PC-3 (cell line): ENCODE measurements at regions of chr12 and their contacts with region 1.

Region 1: DNA sequence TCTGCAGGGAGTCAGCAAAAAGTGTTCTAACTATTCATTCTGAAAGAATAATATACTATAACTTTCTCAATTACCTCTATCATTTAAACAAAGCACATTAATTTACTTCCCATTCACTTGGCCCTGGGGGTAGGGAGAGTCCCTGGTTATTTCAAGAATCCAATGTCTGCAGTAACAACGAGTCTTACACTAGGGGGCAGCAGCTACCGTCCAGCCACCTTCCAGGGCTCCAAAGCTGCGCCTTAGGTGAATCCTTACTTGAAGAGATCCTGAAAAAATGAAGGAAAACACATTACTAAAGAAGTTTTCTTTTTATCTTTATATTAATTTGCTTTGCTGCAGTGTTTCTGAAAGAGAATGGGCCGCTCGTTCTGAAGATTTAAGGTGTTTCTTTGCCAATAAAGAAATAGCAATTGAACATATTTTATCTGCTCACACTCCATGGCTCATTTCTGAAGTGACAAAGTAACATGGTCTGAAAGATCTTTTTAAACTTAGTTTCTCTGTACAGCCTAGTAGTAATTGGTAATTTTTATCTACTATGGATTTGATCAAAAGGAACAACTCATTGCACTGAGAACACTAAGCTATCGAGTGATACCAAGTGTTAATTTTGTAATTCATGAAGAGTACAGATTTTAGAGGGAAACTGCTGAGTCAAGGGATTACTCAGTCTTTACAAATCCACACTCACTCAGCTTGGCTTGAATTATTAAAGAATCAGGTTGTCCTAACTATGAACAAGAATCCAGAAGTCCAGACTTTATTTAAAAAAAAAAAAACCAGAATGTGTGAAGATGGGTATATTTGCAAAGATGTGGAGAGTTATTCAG is 27.6 kb downstream of the BHLHE41 start:
- DNase-seq: peak; percentile 93
- ATAC-seq: peak; percentile 94
- H3K4me3 ChIP-seq: 0 out of 2 replicates have a peak overlapping the region, but pooled peaks have one; percentile 8
- H3K27ac ChIP-seq: peak overlapping the region; percentile 36
- H3K4me1 ChIP-seq: peaks cover 50% of the 10 kb centered on the region
- H3K27me3 ChIP-seq: no peaks in the 10 kb centered on the region
- CTCF ChIP-seq: peak; percentile 99

Region 2: GRCh38 chr12:25677232-25677937 is 419.9 kb before region 1 on chr12:
- CTCF ChIA-PET with region 1: no interaction called
- POLR2A ChIA-PET with region 1: no interaction called
- intact Hi-C with region 1: loop called (anchors 5 kb)
- DNase-seq: peak; percentile 46
- ATAC-seq: peak; percentile 74
- H3K4me3 ChIP-seq: no peak overlapping the region
- H3K27ac ChIP-seq: no peak overlapping the region
- H3K4me1 ChIP-seq: peaks cover 5% of the 10 kb centered on the region; the same call in 1 of the 2 replicates
- H3K27me3 ChIP-seq: no peaks in the 10 kb centered on the region
- CTCF ChIP-seq: peak; percentile 52

Region 3: DNA sequence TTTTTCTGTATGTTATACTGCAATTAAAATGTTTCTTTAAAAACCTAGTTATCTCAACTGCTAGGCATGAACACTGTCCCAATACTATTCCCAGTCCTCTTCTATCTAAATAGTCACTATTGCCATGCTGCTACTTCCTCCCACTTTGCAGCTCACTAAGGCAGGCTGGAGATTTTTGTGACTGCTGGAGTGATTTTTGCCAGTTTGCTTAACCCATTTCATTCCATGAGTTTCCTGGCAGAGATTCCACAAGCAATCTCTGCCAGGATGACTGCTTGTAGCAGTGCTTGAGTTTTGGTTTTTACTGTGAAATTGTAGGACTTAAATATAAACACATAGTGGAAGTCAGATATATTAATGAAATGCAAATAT is 53.3 kb before region 1 on chr12:
- CTCF ChIA-PET with region 1: interaction called, 6 read pairs
- POLR2A ChIA-PET with region 1: no interaction called
- intact Hi-C with region 1: loop called (anchors 2 kb)
- DNase-seq: peak; percentile 53
- ATAC-seq: peak; percentile 49
- H3K4me3 ChIP-seq: peak overlapping the region; percentile 51; the same call in 1 of the 2 replicates
- H3K27ac ChIP-seq: peak overlapping the region; percentile 47
- H3K4me1 ChIP-seq: peaks cover 57% of the 10 kb centered on the region
- H3K27me3 ChIP-seq: no peaks in the 10 kb centered on the region
- CTCF ChIP-seq: no peak

Region 4: DNA sequence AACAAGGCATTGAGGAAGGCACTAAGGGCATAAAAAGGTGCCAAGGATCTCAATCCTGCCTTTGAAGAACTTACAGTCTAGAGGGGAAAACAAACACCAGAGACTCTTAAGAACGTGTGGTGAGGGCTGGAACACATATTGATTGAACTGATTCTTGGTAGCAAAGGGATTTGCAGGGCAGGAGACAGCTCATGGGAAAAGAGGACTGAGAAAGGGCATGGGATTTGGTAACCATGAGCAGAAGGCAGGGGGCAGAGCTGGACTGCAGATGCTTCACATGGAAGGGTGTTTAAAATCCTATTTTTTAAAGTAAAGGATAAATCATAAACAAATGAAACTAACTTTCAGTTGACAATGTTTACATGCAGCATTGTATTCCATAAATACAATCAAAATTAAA is 532.6 kb after region 1 on chr12:
- CTCF ChIA-PET with region 1: no interaction called
- POLR2A ChIA-PET with region 1: no interaction called
- intact Hi-C with region 1: loop called (anchors 5 kb)
- DNase-seq: peak; percentile 41
- ATAC-seq: peak; percentile 28; the same call in 1 of the 2 replicates
- H3K4me3 ChIP-seq: 0 out of 2 replicates have a peak overlapping the region, but pooled peaks have one; percentile 8
- H3K27ac ChIP-seq: peak overlapping the region; percentile 46
- H3K4me1 ChIP-seq: peaks cover 55% of the 10 kb centered on the region
- H3K27me3 ChIP-seq: no peaks in the 10 kb centered on the region
- CTCF ChIP-seq: peak; percentile 79

Region 5: GRCh38 chr12:26701604-26702215 is 604.4 kb after region 1 on chr12:
- CTCF ChIA-PET with region 1: no interaction called
- POLR2A ChIA-PET with region 1: no interaction called
- intact Hi-C with region 1: loop called (anchors 1 kb)
- DNase-seq: peak; percentile 80
- ATAC-seq: no peak
- H3K4me3 ChIP-seq: no peak overlapping the region
- H3K27ac ChIP-seq: no peak overlapping the region
- H3K4me1 ChIP-seq: peaks cover 29% of the 10 kb centered on the region
- H3K27me3 ChIP-seq: no peaks in the 10 kb centered on the region
- CTCF ChIP-seq: peak; percentile 95